PC-9 (cell line): ENCODE measurements at regions of chr6 and their contacts with region 1.

Region 1: GRCh38 chr6:36350681-36351571 is 14.2 kb upstream of the BNIP5 start:
- DNase-seq: peak; percentile 49 to 80
- H3K4me3 ChIP-seq: no peak overlapping the region
- H3K27ac ChIP-seq: peak overlapping the region; percentile 32; the same call in 1 of the 2 replicates
- H3K4me1 ChIP-seq: peaks cover 28% of the 10 kb centered on the region
- H3K27me3 ChIP-seq: no peaks in the 10 kb centered on the region
- CTCF ChIP-seq: no peak

Region 2: DNA sequence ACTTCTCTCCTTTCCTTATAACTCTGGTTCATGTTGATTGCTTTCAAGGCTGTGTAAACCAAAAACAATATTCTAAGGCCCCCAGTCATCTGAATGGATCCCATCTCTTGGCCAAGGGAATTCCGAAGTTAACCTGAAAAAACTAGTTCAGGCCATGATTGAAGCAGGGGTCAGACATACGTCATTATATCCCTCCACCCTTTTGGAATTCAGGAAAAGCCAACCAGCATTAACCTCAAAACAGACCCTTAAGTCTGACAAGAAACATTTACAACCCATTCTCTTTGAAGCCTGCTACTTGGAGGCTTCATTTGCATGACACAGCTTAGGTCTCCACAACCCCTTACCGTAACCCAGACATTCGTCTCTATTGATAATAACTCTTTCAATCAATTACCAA is 366.2 kb before region 1 on chr6:
- CTCF ChIA-PET with region 1: no interaction called
- POLR2A ChIA-PET with region 1: interaction called, 13 read pairs
- intact Hi-C with region 1: no loop called
- DNase-seq: no peak
- H3K4me3 ChIP-seq: no peak overlapping the region
- H3K27ac ChIP-seq: no peak overlapping the region
- H3K4me1 ChIP-seq: no peaks in the 10 kb centered on the region
- H3K27me3 ChIP-seq: no peaks in the 10 kb centered on the region
- CTCF ChIP-seq: no peak

Region 3: GRCh38 chr6:36245572-36246061 is 105.3 kb before region 1 on chr6:
- CTCF ChIA-PET with region 1: no interaction called
- POLR2A ChIA-PET with region 1: no interaction called
- intact Hi-C with region 1: no loop called
- DNase-seq: no peak
- H3K4me3 ChIP-seq: no peak overlapping the region
- H3K27ac ChIP-seq: no peak overlapping the region
- H3K4me1 ChIP-seq: peaks cover 50% of the 10 kb centered on the region
- H3K27me3 ChIP-seq: no peaks in the 10 kb centered on the region
- CTCF ChIP-seq: no peak

Region 4: DNA sequence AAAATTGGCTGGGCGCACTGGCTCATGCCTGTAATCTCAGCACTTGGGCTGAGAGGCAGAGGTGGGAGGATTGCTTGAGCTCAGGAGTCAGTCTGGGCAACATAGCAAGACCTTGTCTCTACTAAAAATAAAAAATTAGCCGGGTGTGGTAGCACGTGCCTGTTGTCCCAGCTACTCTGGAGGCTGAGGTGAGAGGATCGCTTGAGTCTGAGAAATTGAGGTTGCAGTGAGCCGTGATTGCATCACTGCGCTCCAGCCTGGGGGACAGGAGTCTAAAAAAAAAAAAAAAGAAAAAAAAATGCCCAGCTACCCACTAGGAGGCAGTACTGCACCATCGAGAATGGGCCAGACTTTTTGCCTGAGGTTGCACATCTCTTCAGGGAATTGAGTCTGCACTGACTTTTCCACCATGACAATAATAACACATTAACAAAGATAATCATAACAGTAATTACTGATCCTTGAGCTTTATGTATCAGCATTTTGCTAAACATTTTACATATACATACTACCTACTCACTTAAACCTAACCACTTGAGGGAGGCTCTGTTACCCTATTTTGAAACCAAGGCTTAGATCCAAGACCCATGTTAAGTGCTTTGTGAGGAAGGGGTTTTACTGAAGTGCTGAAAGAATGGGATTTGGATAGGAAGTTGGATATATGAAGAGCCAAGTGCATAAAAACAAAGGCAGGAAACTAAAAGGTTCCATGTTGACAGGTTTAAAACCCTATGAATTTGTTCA is 264.3 kb after region 1 on chr6:
- CTCF ChIA-PET with region 1: interaction called, 15 read pairs
- POLR2A ChIA-PET with region 1: no interaction called
- intact Hi-C with region 1: no loop called
- DNase-seq: peak; percentile 43 to 63
- H3K4me3 ChIP-seq: no peak overlapping the region
- H3K27ac ChIP-seq: no peak overlapping the region
- H3K4me1 ChIP-seq: peaks cover 24% of the 10 kb centered on the region
- H3K27me3 ChIP-seq: no peaks in the 10 kb centered on the region
- CTCF ChIP-seq: peak; percentile 83